ENCODE measurements at regions of chr10 and their contacts with region 1.

Region 1: DNA sequence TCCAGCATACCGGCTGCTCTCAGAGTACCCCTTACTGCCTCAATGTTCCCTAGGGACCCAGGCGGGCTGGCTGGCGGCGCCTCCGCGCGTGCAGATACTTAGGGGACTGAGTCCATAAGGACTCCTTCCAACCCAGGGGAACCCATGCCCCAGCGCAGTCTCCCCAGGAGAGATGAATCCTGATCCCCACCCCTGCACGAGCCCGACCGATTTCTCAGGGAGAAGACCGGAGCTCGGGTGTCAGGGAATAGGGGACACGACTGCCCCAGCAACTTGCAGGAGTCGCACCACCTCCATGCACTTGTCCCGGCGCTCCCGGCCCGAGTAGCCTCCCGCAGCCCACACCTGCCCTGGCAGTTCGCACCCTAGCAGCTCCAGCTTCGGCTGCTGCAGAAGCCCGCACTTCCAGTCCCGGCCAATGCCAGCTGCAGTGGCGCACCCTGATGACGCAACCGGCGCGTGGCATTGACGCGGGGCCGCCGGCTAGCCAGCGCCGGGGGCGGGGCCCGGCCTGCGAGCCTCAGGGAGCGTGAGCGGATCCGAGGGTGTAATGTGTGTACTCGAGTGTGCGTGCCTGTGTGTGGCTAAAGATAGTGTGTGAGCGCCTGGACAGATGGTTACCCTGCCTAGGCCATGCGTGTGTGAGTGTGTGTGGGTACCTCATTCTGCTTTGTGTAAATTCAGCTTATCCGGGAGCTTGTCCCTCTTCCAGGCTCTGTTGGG is at the start of gene GPAM:
- DNase-seq: peak; percentile 99
- H3K4me3 ChIP-seq: peak within 1 kb of the TSS; percentile 57 to 81 (median 72)
- H3K27ac ChIP-seq: peak within 1 kb of the TSS; percentile 67 to 76 (median 70)
- H3K4me1 ChIP-seq: peaks cover 12 to 25% (median 15%) of the 10 kb centered on the region in 4 donors
- H3K27me3 ChIP-seq: no peaks in the 10 kb centered on the region
- CTCF ChIP-seq: peak in 2 of 3 experiments; percentile 14 to 42
- EP300 ChIP-seq: no peak
- POLR2A ChIP-seq: no peak
- total RNA-seq, gene GPAM: 4.5 to 7.2 (median 6.5) TPM

Region 2: DNA sequence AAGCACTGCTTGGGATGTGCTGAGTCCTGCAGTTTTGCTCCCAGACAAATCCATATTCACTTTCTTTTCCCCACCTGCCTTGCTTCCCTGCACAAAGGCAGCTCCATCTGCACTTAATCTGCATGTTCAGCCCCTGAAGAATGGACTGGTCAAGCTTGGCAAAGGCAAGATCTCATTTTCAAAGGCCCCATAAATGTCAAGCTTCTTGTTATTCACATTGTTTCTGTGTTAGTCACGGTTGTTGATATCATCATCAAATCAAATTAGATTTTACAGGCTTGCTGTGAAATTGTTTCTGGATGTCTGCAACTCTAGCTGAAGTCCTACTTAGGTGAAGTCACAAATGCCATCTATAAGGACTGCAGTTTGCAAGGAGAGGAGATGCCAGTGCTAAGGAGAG is 91.0 kb before region 1 on chr10:
- intact Hi-C with region 1: no loop called
- DNase-seq: no peak
- H3K4me3 ChIP-seq: no peak overlapping the region
- H3K27ac ChIP-seq: no peak overlapping the region
- H3K4me1 ChIP-seq: no peaks in the 10 kb centered on the region
- H3K27me3 ChIP-seq: no peaks in the 10 kb centered on the region
- CTCF ChIP-seq: no peak
- EP300 ChIP-seq: no peak
- POLR2A ChIP-seq: no peak

Region 3: GRCh38 chr10:112115799-112116385 is 67.6 kb before region 1 on chr10:
- intact Hi-C with region 1: no loop called
- DNase-seq: no peak
- H3K4me3 ChIP-seq: no peak overlapping the region
- H3K27ac ChIP-seq: no peak overlapping the region
- H3K4me1 ChIP-seq: no peaks in the 10 kb centered on the region
- H3K27me3 ChIP-seq: peaks cover 0 to 4% (median 0%) of the 10 kb centered on the region in 4 donors
- CTCF ChIP-seq: peak in 2 of 3 experiments; percentile 37 to 55
- EP300 ChIP-seq: no peak
- POLR2A ChIP-seq: no peak

Region 4: DNA sequence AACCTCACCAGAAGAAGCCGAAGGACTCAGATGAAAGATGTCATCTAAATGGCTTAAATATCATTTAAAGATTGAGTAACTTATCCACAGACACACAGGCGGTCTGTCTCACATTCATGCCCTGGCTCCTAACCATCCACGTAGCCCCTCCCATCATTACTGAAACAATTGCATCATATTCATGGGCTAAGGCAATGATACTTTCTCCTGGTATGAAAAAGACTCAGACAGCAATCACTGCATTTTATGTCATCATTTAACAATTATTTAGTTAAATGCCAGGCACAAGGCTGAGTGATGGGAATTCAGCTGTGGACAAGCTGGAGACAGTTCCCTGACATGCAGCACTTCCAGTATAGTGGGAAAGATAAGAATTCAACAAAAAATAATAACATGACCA is 88.5 kb after region 1 on chr10:
- intact Hi-C with region 1: no loop called
- DNase-seq: no peak
- H3K4me3 ChIP-seq: no peak overlapping the region
- H3K27ac ChIP-seq: no peak overlapping the region
- H3K4me1 ChIP-seq: no peaks in the 10 kb centered on the region
- H3K27me3 ChIP-seq: no peaks in the 10 kb centered on the region
- CTCF ChIP-seq: no peak
- EP300 ChIP-seq: no peak
- POLR2A ChIP-seq: no peak

Region 5: GRCh38 chr10:112307358-112308124 is 124.1 kb after region 1 on chr10:
- intact Hi-C with region 1: loop called (anchors 5 kb)
- DNase-seq: no peak
- H3K4me3 ChIP-seq: no peak overlapping the region
- H3K27ac ChIP-seq: no peak overlapping the region
- H3K4me1 ChIP-seq: no peaks in the 10 kb centered on the region
- H3K27me3 ChIP-seq: peaks cover 0 to 14% (median 0%) of the 10 kb centered on the region in 4 donors
- CTCF ChIP-seq: peak; percentile 48 to 69 (median 52)
- EP300 ChIP-seq: no peak
- POLR2A ChIP-seq: no peak

Region 6: DNA sequence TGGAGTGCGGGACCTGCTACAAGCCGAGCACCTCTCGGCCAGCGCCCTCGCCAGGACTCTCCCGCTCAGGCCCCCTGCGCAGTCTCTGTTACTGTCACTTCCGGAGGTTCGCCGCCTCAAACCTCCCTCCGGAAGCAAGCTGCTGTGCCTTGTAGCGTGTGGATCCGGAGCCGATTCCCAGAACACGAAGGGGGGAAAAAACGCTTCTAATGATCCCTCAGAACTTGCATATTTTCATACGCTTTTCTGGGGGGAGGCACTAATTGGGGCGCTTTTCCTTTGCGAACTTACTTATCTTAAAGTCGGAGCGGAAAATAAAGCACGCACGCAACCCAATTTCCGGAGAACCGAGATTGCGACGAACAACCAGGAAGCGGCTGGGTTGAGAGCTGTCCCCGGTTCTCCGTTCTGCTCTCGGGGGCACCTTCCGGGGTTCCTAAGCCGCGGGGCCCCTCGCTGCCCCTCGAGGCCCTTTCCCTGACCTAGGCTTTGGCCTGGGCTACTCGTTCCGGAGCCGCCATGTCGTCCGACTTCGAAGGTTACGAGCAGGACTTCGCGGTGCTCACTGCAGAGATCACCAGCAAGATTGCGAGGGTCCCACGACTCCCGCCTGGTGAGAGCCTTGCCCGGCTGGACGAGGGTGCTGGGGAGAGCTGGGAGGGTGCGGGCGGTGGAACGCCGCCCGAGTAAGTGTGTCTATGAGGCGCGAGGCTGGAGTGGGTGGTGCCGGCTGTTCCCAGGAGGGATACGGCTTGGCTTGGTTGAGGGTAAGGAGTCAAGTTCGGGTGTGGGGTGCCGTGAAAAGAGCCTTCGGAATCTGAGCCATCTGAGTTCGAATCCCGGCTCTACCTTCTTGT is 263.6 kb after region 1 on chr10 and contains the starts of genes VTI1A and ZDHHC6:
- intact Hi-C with region 1: loop called (anchors 10 kb)
- DNase-seq: peak; percentile 93
- H3K4me3 ChIP-seq: peak within 1 kb of the TSS; percentile 65 to 91 (median 88)
- H3K27ac ChIP-seq: peak within 1 kb of the TSS; percentile 86 to 90 (median 88)
- H3K4me1 ChIP-seq: peaks cover 22 to 41% (median 34%) of the 10 kb centered on the region in 4 donors
- H3K27me3 ChIP-seq: no peaks in the 10 kb centered on the region
- CTCF ChIP-seq: peak in 2 of 3 experiments; percentile 10 to 23
- EP300 ChIP-seq: no peak
- POLR2A ChIP-seq: no peak
- total RNA-seq, gene VTI1A: 27.6 to 42.7 (median 33.8) TPM
- total RNA-seq, gene ZDHHC6: 15.6 to 21.2 (median 17.3) TPM